Endothelial cell of umbilical vein (primary cell): ENCODE measurements at regions of chr1 and their contacts with region 1.

Region 1: GRCh38 chr1:218164111-218164929 is 120.8 kb upstream of the RRP15 start:
- DNase-seq: peak; percentile 29
- H3K4me3 ChIP-seq: peak overlapping the region; percentile 10 to 33 (median 24)
- H3K27ac ChIP-seq: no peak overlapping the region
- H3K4me1 ChIP-seq: peaks cover 14% of the 10 kb centered on the region
- H3K27me3 ChIP-seq: peaks cover 33 to 79% of the 10 kb centered on the region in 2 experiments
- CTCF ChIP-seq: no peak
- POLR2A ChIP-seq: no peak

Region 2: DNA sequence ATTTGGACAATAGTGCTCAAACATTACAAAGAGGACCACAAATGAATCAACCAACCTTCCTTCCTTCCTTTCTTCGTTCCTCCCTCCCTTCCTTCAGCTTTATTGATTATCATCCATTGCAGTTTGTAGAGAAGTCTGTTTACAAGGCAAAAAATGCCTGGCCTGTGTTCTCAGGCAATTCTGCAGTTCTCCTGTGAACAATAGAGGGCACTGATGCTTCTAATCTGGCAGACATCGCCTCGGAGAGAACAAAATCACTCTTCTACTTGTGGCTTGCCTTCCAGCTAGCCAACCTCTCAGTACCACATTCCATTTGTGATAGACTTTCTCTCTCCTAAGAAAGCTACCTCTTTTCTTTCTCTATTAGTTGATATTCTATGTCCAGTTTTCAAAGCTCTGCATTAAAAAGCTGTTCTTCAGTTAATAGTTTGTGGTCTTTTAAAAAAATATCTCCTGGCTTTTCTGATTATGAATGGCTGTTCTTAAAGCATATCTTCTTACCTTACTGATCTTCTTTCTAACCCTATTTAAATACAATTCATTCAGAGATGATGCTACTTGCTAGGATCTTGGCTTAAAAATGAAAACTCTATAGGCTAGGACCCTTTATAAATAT is 1414.2 kb before region 1 on chr1:
- CTCF ChIA-PET with region 1: no interaction called
- POLR2A ChIA-PET with region 1: no interaction called
- dilution Hi-C with region 1: no loop called
- intact Hi-C with region 1: loop called (anchors 10 kb)
- DNase-seq: peak; percentile 2
- H3K4me3 ChIP-seq: no peak overlapping the region
- H3K27ac ChIP-seq: no peak overlapping the region
- H3K4me1 ChIP-seq: no peaks in the 10 kb centered on the region
- H3K27me3 ChIP-seq: no peaks in the 10 kb centered on the region
- CTCF ChIP-seq: peak; percentile 4 to 18
- POLR2A ChIP-seq: no peak

Region 3: GRCh38 chr1:217425422-217425821 is 738.9 kb before region 1 on chr1:
- CTCF ChIA-PET with region 1: no interaction called
- POLR2A ChIA-PET with region 1: no interaction called
- dilution Hi-C with region 1: no loop called
- intact Hi-C with region 1: loop called (anchors 10 kb)
- DNase-seq: no peak
- H3K4me3 ChIP-seq: no peak overlapping the region
- H3K27ac ChIP-seq: no peak overlapping the region
- H3K4me1 ChIP-seq: no peaks in the 10 kb centered on the region
- H3K27me3 ChIP-seq: no peaks in the 10 kb centered on the region
- CTCF ChIP-seq: no peak
- POLR2A ChIP-seq: no peak

Region 4: DNA sequence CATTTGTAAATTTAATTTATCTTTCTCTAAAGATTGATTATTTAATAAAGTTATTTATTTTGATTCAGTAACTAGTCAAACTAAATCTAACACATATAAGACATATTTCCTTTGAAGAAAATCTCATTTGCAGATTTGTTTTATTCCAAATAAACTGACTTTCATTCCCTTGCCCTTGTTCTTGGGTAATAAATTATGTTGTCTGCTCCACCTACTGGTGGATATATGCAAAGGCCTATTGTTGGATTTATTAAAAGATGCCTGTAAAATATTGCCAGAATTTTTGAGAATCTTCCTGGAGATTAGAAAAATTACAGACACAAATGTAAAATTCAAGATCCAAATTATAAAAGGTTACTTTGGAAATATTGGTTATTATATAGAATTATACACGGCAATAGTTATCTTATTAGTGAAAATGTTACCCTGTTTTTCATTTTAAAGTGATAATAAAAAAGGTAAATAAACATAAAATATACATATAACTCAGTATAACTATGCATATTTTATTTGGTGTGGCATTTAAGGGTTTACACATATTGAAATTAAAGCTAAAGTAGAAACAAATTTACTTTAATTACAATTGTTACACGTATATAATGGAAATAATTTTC is 417.1 kb before region 1 on chr1:
- CTCF ChIA-PET with region 1: no interaction called
- POLR2A ChIA-PET with region 1: no interaction called
- dilution Hi-C with region 1: no loop called
- intact Hi-C with region 1: loop called (anchors 5 kb)
- DNase-seq: peak; percentile 34
- H3K4me3 ChIP-seq: no peak overlapping the region
- H3K27ac ChIP-seq: no peak overlapping the region
- H3K4me1 ChIP-seq: no peaks in the 10 kb centered on the region
- H3K27me3 ChIP-seq: no peaks in the 10 kb centered on the region
- CTCF ChIP-seq: peak; percentile 47 to 49
- POLR2A ChIP-seq: no peak